ENCODE measurements at regions of chr16 and their contacts with region 1.

Region 1: DNA sequence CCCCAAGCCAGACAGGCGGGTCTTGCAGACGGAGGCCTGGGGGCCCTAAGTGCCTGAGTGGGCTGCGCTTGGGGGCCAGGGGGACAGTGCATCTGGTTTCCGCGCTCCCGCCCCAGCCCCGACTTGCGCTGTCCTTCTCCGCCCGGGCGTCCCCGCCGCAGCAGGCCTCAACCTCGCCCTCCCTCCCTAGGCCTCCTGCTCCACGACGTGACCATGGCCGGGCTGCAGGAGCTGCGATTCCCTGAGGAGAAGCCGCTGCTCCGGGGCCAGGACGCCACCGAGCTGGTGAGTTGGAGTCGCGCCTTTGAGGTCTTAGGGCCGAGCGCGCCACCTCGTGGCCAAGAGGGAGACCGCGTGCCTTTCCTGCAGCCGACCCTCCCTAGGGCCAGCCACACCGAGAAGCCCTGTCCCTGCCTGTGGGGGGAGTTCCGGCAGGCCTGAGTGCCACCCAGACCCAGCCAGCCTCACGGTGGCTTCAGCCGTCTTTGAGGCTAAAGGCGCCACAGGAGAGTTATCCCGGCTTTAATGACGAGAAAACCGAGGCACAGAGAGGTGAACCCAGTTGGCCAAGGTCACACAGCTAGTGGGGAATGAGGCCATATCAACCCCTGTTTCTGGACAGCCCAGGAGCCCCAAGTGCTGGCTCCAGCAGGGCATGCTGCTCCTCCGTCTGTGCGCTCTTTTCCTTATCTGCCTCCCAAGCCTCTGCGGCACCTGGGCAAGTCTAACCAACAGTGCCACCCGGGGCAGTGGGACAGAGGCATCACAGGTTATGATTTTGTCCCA is 12.2 kb upstream of the NDRG4 start:
- DNase-seq: peak; percentile 75
- H3K4me3 ChIP-seq: no peak overlapping the region
- H3K27ac ChIP-seq: no peak overlapping the region
- H3K4me1 ChIP-seq: no peaks in the 10 kb centered on the region
- H3K27me3 ChIP-seq: no peaks in the 10 kb centered on the region
- CTCF ChIP-seq: peak; percentile 94 to 97
- POLR2A ChIP-seq: no peak

Region 2: GRCh38 chr16:58329147-58329546 is 158.6 kb before region 1 on chr16:
- CTCF ChIA-PET with region 1: interaction called, 550 read pairs
- POLR2A ChIA-PET with region 1: interaction called, 5 read pairs
- dilution Hi-C with region 1: no loop called
- intact Hi-C with region 1: no loop called
- DNase-seq: no peak
- H3K4me3 ChIP-seq: no peak overlapping the region
- H3K27ac ChIP-seq: no peak overlapping the region
- H3K4me1 ChIP-seq: no peaks in the 10 kb centered on the region
- H3K27me3 ChIP-seq: peaks cover 6% of the 10 kb centered on the region in 2 experiments
- CTCF ChIP-seq: no peak
- POLR2A ChIP-seq: no peak

Region 3: DNA sequence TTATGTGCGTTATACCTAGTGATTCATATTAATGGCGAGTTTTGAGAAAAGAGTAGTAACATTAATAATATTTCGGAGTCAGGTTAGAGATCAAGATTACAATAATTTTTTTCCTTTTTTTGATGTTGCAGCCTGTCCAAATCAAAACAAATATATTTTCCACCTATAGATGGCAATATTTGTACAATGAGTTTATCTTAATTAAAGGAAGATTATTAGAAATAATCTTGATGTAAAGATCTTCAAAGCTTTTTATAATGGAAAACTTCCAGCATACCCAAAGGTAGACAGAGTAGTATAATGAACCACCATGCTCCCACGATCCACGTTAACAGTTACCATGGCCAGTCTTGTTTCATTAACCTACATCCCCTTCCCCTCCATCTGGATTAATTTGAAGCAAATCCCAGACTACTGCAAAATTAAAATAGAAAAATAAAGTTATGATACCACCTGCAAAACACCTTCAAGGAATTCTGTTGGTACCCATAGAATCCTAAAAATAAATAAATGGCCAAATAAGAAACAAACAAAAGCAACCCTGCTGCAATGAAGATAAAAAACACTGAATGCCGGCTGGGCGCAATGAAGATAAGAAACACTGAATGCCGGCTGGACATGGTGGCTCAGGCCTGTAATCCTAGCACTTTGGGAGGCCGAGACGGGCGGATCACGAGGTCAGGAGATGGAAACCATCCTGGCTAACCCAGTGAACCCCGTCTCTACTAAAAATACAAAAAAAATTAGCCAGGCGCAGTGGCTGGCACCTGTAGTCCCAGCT is 142.0 kb before region 1 on chr16:
- CTCF ChIA-PET with region 1: interaction called, 550 read pairs
- POLR2A ChIA-PET with region 1: no interaction called
- dilution Hi-C with region 1: no loop called
- intact Hi-C with region 1: loop called (anchors 1 kb)
- DNase-seq: peak; percentile 34
- H3K4me3 ChIP-seq: no peak overlapping the region
- H3K27ac ChIP-seq: no peak overlapping the region
- H3K4me1 ChIP-seq: no peaks in the 10 kb centered on the region
- H3K27me3 ChIP-seq: peaks cover 0 to 3% of the 10 kb centered on the region in 2 experiments
- CTCF ChIP-seq: peak in 1 of 2 donors; percentile 16
- POLR2A ChIP-seq: no peak

Region 4: DNA sequence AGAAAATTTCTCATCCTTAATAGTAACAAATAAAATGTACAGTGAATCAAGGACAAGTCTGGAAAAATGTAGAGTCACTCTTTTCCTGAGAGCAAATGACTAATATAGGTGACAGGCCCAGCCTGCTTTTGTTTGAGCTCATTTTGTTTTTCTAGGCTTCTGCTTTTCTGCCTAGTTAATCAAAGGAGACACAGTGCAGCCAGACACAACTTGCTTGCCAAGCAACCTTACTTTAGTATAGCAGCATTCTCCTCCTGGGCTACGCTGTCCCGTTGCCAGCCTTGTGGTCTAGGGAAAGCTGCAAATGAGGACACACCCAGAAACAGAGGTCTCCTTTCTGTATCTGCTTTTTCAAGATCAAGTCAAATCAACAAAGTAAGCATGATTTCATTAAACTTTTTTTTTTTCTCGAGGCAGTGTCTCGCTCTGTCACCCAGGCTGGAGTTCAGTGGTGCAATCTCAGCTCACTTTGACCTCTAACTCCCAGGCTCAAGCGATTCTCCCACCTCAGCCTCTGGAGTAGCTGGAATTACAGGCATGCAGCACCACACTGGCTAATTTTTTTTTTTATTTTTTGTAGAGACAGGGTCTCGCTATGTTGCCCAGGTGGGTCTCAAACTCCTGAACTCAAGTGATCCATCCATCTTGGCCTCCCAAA is 78.3 kb before region 1 on chr16:
- CTCF ChIA-PET with region 1: interaction called, 12 read pairs
- POLR2A ChIA-PET with region 1: no interaction called
- dilution Hi-C with region 1: no loop called
- intact Hi-C with region 1: no loop called
- DNase-seq: peak; percentile 90
- H3K4me3 ChIP-seq: no peak overlapping the region
- H3K27ac ChIP-seq: peak overlapping the region; percentile 79
- H3K4me1 ChIP-seq: peaks cover 15% of the 10 kb centered on the region
- H3K27me3 ChIP-seq: no peaks in the 10 kb centered on the region
- CTCF ChIP-seq: no peak
- POLR2A ChIP-seq: no peak

Region 5: GRCh38 chr16:58444265-58444664 is 43.5 kb before region 1 on chr16:
- CTCF ChIA-PET with region 1: interaction called, 11 read pairs
- POLR2A ChIA-PET with region 1: no interaction called
- dilution Hi-C with region 1: no loop called
- intact Hi-C with region 1: no loop called
- DNase-seq: no peak
- H3K4me3 ChIP-seq: no peak overlapping the region
- H3K27ac ChIP-seq: no peak overlapping the region
- H3K4me1 ChIP-seq: peaks cover 6% of the 10 kb centered on the region
- H3K27me3 ChIP-seq: no peaks in the 10 kb centered on the region
- CTCF ChIP-seq: no peak
- POLR2A ChIP-seq: no peak

Region 6: GRCh38 chr16:58471321-58471975 is 16.3 kb before region 1 on chr16:
- CTCF ChIA-PET with region 1: interaction called, 15 read pairs
- POLR2A ChIA-PET with region 1: no interaction called
- dilution Hi-C with region 1: no loop called
- intact Hi-C with region 1: no loop called
- DNase-seq: no peak
- H3K4me3 ChIP-seq: no peak overlapping the region
- H3K27ac ChIP-seq: no peak overlapping the region
- H3K4me1 ChIP-seq: peaks cover 12% of the 10 kb centered on the region
- H3K27me3 ChIP-seq: no peaks in the 10 kb centered on the region
- CTCF ChIP-seq: no peak
- POLR2A ChIP-seq: no peak

Region 7: GRCh38 chr16:58605562-58605961 is 117.8 kb after region 1 on chr16:
- CTCF ChIA-PET with region 1: no interaction called
- POLR2A ChIA-PET with region 1: no interaction called
- dilution Hi-C with region 1: no loop called
- intact Hi-C with region 1: no loop called
- DNase-seq: no peak
- H3K4me3 ChIP-seq: no peak overlapping the region
- H3K27ac ChIP-seq: no peak overlapping the region
- H3K4me1 ChIP-seq: peaks cover 7% of the 10 kb centered on the region
- H3K27me3 ChIP-seq: no peaks in the 10 kb centered on the region
- CTCF ChIP-seq: no peak
- POLR2A ChIP-seq: no peak

Region 8: DNA sequence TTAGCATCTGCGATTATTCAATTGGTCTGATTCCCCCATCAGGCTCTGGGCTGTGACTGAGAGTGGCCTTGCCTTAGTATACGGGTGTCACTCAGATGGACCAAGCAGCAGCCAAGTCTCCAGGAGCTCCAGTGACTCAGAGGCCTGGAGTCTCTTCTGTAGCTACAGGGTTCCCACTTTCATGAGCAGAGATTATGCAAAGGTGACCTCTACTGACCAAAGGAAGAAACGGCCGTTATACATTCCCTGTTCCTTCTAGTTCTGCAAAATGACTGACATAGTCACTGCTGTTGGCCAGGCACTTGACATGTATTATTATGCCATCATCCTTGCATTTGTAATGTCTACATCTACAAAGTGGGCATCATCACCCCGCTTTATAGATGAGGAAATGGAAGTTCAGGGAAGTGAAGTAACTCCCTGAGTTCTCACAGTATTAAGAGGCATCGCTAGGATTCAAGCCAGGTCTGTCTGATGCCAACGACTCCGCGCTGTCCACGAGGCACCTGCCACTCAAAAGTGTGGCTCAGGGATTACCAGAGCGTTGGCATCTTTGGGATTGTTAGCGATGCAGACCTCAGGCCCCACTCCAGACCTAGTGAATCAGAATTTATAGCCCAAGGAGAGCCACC is 173.6 kb after region 1 on chr16:
- CTCF ChIA-PET with region 1: interaction called, 15 read pairs
- POLR2A ChIA-PET with region 1: no interaction called
- dilution Hi-C with region 1: no loop called
- intact Hi-C with region 1: no loop called
- DNase-seq: peak; percentile 81
- H3K4me3 ChIP-seq: no peak overlapping the region
- H3K27ac ChIP-seq: no peak overlapping the region
- H3K4me1 ChIP-seq: no peaks in the 10 kb centered on the region
- H3K27me3 ChIP-seq: no peaks in the 10 kb centered on the region
- CTCF ChIP-seq: peak; percentile 55 to 65
- POLR2A ChIP-seq: no peak